ENCODE measurements at regions of chr17 and their contacts with region 1.

Region 1: DNA sequence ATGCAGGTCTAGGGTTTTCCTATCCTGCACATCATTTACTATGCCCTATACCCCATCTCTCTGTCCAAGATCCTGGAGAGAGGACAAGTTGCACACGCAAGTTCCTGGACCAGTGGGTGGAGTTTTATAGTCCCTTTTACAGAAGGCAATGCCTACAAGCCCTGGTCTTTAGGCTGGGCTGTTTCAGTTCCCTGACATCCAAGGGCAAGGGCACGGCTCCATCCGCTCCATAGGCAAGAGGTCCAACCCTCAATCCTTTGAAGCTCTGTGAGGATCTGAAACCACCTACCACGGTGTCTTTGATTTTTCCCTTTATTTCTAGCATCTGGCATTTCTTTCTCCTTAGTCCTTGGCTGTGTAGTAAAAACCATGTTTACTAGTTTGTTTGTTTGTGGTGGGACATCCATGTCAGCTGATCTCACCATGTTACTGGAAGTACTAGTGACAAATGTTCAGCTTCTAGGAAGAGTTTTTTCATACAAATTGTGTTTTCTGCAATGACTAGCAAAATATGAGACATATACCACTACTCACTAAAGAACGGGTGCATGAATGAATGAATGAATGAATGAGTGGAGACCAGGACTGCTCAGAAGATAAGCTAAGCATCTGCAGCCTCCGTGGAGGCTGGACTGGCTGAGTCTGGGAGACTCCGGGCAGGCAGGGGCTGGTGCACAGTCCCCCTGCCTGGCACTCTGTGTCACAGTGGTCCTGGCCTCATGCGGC is 359.4 kb downstream of the SLC39A11 start:
- DNase-seq: no peak
- ATAC-seq: no peak
- H3K4me3 ChIP-seq: no peak overlapping the region
- H3K27ac ChIP-seq: no peak overlapping the region
- H3K4me1 ChIP-seq: peaks cover 0 to under 1% of the 10 kb centered on the region in 2 experiments; a peak in 1 of 4 replicates
- H3K27me3 ChIP-seq: no peaks in the 10 kb centered on the region
- CTCF ChIP-seq: no peak
- POLR2A ChIP-seq: no peak
- RAD21 ChIP-seq: no peak

Region 2: DNA sequence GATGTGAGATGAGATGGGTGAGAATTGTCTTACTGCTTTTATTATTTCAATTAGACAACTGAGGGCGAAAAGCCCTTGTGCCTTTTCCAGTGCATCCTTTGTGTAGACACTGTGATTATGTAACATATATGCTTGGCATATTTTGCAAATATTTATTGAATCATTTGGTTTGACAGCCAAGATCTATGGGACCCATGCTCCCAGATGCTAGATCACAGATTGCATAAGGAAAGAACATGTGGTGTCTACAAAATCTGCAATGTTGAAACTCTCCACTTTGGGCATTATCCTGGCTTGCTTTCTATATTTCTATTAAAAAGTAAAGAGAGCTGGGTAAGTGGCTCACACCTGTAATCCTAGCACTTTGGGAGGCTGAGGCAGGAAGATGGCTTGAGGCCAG is 455.0 kb after region 1 on chr17:
- CTCF ChIA-PET with region 1: interaction called, 212 read pairs
- POLR2A ChIA-PET with region 1: interaction called, 12 read pairs
- RAD21 ChIA-PET with region 1: interaction called, 13 to 25 read pairs
- intact Hi-C with region 1: loop called (anchors 1 kb)
- DNase-seq: no peak
- ATAC-seq: no peak
- H3K4me3 ChIP-seq: no peak overlapping the region
- H3K27ac ChIP-seq: no peak overlapping the region
- H3K4me1 ChIP-seq: peaks cover 0 to 23% of the 10 kb centered on the region in 2 experiments; a peak in 3 of 4 replicates
- H3K27me3 ChIP-seq: no peaks in the 10 kb centered on the region
- CTCF ChIP-seq: no peak
- POLR2A ChIP-seq: no peak
- RAD21 ChIP-seq: no peak